ENCODE measurements at regions of chr6 and their contacts with region 1.

Region 1: DNA sequence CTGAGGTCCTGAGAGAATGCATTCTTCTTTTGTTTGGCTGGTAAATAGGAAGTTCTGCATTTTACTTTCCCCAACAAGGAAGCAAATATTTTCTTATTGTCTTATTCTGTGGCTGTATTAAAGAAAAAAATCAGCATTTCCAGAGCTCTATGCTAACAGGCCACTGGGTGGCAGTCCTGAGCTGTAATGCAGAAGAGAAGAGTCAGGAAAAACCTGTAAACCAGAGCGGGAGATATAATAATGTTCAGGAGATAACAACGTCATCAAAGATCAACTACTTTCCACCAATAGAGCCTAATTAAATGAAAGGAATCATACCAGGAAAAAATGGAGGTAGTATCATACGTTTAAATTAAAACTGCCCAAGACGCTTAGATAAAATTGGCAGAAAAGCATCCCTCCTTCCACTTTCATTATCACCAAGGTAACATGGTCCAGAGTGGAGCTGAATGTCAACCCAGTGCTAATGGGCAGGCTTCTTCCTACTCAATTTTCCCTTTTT is 55.6 kb upstream of the CARMIL1 start:
- DNase-seq: peak; percentile 81
- H3K4me3 ChIP-seq: peak overlapping the region in 1 of 3 experiments; percentile 20
- H3K27ac ChIP-seq: no peak overlapping the region
- H3K4me1 ChIP-seq: peaks cover 6% of the 10 kb centered on the region
- H3K27me3 ChIP-seq: no peaks in the 10 kb centered on the region
- CTCF ChIP-seq: peak; percentile 68 to 72
- POLR2A ChIP-seq: no peak

Region 2: GRCh38 chr6:24855395-24856245 is 367.9 kb before region 1 on chr6:
- CTCF ChIA-PET with region 1: interaction called, 10 read pairs
- POLR2A ChIA-PET with region 1: no interaction called
- dilution Hi-C with region 1: no loop called
- intact Hi-C with region 1: loop called (anchors 2 kb)
- DNase-seq: peak; percentile 70
- H3K4me3 ChIP-seq: no peak overlapping the region
- H3K27ac ChIP-seq: no peak overlapping the region
- H3K4me1 ChIP-seq: no peaks in the 10 kb centered on the region
- H3K27me3 ChIP-seq: no peaks in the 10 kb centered on the region
- CTCF ChIP-seq: peak; percentile 74 to 76
- POLR2A ChIP-seq: no peak

Region 3: DNA sequence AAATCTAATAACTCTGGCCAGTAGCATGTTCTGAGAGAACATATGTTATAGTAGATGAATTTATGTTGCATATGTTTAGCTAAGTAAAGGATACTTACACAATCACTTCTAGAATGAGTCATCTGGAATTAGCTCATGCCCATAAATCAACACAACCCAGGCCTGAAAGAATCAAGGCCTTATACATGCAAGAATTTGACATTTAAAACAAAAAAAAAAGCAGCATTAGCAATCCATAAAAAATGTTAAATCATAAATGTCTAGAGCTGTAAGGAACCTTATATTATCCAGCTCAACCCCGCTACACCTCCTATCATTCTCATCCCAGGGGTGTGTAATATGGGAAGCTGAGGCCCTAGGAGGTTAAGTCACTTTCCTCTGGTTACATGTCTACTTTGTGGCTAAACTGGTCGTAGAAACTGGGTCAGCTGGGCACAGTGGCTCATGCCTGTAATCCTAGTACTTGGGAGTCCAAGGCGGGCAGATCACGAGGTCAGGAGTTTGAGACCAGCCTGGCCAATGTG is 49.5 kb before region 1 on chr6:
- CTCF ChIA-PET with region 1: interaction called, 8 read pairs
- POLR2A ChIA-PET with region 1: no interaction called
- dilution Hi-C with region 1: no loop called
- intact Hi-C with region 1: loop called (anchors 2 kb)
- DNase-seq: peak; percentile 93
- H3K4me3 ChIP-seq: no peak overlapping the region
- H3K27ac ChIP-seq: peak overlapping the region; percentile 38
- H3K4me1 ChIP-seq: peaks cover 37% of the 10 kb centered on the region
- H3K27me3 ChIP-seq: no peaks in the 10 kb centered on the region
- CTCF ChIP-seq: no peak
- POLR2A ChIP-seq: no peak

Region 4: GRCh38 chr6:25263657-25264056 is 40.1 kb after region 1 on chr6:
- CTCF ChIA-PET with region 1: interaction called, 15 read pairs
- POLR2A ChIA-PET with region 1: no interaction called
- dilution Hi-C with region 1: no loop called
- intact Hi-C with region 1: no loop called
- DNase-seq: no peak
- H3K4me3 ChIP-seq: no peak overlapping the region
- H3K27ac ChIP-seq: no peak overlapping the region
- H3K4me1 ChIP-seq: no peaks in the 10 kb centered on the region
- H3K27me3 ChIP-seq: no peaks in the 10 kb centered on the region
- CTCF ChIP-seq: no peak
- POLR2A ChIP-seq: no peak

Region 5: GRCh38 chr6:25556516-25556915 is 333.0 kb after region 1 on chr6:
- CTCF ChIA-PET with region 1: interaction called, 94 read pairs
- POLR2A ChIA-PET with region 1: no interaction called
- dilution Hi-C with region 1: no loop called
- intact Hi-C with region 1: loop called (anchors 1 kb)
- DNase-seq: peak; percentile 83
- H3K4me3 ChIP-seq: no peak overlapping the region
- H3K27ac ChIP-seq: no peak overlapping the region
- H3K4me1 ChIP-seq: no peaks in the 10 kb centered on the region
- H3K27me3 ChIP-seq: no peaks in the 10 kb centered on the region
- CTCF ChIP-seq: peak; percentile 73 to 85
- POLR2A ChIP-seq: no peak

Region 6: GRCh38 chr6:25601800-25602673 is 378.5 kb after region 1 on chr6:
- CTCF ChIA-PET with region 1: interaction called, 16 read pairs
- POLR2A ChIA-PET with region 1: no interaction called
- dilution Hi-C with region 1: no loop called
- intact Hi-C with region 1: loop called (anchors 1 kb)
- DNase-seq: peak; percentile 62
- H3K4me3 ChIP-seq: no peak overlapping the region
- H3K27ac ChIP-seq: no peak overlapping the region
- H3K4me1 ChIP-seq: no peaks in the 10 kb centered on the region
- H3K27me3 ChIP-seq: peaks cover 0 to 2% of the 10 kb centered on the region in 2 experiments
- CTCF ChIP-seq: peak; percentile 10 to 19
- POLR2A ChIP-seq: no peak